Aorta (tissue), 5 donors: ENCODE measurements at regions of chr7 and their contacts with region 1.

Region 1: DNA sequence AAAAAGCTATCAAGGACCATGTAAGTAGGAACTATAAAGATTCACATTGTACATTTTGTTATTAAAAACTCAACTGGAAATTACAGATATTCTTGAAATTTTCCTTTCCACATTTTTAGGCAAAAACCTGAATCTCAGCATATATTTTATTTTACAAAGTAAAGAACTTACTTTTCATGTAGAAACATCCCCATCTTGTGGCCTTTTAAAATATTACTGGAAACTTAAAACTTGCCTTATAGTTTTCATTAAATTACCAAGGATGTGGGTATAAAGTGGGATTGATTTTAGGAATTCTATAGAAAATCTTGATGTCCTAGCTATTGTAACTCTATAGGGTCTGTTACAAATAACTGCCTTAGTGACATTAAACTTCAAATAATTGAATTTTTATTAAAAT is 10.6 kb downstream of the DBF4 start:
- DNase-seq: no peak
- ATAC-seq: no peak
- H3K4me3 ChIP-seq: no peak overlapping the region
- H3K27ac ChIP-seq: no peak overlapping the region
- H3K4me1 ChIP-seq: no peaks in the 10 kb centered on the region
- H3K27me3 ChIP-seq: no peaks in the 10 kb centered on the region

Region 2: DNA sequence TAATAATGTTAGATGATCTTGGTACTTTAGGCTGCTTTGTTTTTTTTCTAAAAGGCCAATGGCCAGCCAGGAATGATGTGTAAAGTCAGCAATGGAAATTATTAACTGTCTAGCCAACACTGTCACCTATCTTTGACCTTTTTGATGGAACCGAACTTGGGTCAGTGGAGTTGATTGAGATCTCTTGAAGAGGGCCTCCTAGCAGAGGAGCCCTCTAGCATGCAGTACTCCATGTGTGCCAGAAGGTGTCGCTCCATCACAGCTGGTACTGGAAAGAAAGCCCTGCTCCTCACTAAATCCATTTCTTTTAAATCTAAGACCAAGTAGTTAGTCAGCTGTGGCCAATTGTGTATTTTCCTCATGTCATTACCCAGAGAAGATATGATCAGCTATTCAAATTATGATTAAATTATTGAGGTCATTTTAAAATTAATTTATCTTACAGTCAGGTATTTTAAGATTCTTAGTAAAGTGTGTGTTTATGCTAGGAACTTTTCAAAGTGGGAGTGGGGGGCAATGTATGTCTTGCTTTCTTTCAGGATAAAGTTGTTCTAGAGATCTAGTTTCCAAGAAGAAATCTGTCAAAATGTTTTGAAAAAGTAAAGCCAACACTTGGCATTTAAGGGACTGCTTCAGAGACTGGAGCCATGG is 574.5 kb before region 1 on chr7:
- intact Hi-C with region 1: loop called in 1 of 2 experiments (anchors 10 kb)
- DNase-seq: peak in 1 of 2 donors; percentile 49
- ATAC-seq: peak; percentile 94
- H3K4me3 ChIP-seq: no peak overlapping the region
- H3K27ac ChIP-seq: no peak overlapping the region
- H3K4me1 ChIP-seq: no peaks in the 10 kb centered on the region
- H3K27me3 ChIP-seq: no peaks in the 10 kb centered on the region

Region 3: GRCh38 chr7:87345166-87345927 is 541.5 kb before region 1 on chr7 and contains the start of gene CROT:
- intact Hi-C with region 1: loop called in 1 of 2 experiments (anchors 10 kb)
- DNase-seq: peak; percentile 98
- ATAC-seq: peak; percentile 100
- H3K4me3 ChIP-seq: peak within 1 kb of the TSS; percentile 74 to 78
- H3K27ac ChIP-seq: peak within 1 kb of the TSS; percentile 83 to 89
- H3K4me1 ChIP-seq: peaks cover 1 to 3% of the 10 kb centered on the region in 2 donors
- H3K27me3 ChIP-seq: no peaks in the 10 kb centered on the region
- total RNA-seq, gene CROT: 11.8 to 19.5 TPM

Region 4: DNA sequence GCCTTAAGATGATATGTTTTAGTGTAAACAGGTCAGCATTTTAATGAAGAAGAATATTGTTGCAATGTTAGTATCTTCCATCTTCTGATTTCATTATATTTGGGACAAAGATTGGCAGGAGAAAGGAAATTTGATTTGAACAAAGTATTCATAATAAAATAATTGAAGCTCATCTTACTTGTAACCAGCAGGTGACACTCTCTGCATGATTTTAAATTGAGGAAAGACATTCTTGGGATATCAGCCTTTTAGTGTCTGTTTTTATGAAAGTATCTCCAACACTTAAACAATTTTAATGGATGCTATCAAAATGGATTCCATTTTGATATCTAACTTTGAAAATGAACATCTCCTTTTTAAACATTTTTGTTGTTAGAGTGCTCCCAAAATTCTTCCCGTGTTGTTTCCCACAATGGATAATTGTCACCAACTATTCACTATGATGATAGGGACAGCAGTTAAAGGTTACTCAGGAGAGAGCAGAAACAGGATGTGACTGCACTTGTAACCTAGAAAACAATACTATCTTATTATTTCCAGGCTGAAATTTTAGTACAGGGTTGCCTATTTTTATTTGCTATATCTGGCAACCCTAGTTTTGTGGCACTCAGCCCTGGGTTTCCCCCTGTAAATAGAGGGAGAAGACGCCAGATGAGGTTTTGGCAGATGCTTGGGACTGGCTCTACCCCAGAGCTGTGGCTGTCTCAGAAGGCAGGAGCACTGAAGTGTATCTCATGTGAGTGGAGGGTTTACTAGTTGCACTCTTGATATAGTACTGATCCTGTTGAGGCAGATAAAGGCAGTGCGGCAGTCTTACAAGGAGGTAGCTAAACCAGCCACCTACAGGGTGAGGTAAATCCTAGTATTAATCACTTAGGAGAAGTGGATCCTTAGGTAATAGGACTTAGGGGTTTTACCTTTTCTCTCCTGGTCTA is 380.4 kb before region 1 on chr7:
- intact Hi-C with region 1: loop called in 1 of 2 experiments (anchors 5 kb)
- DNase-seq: no peak
- ATAC-seq: no peak
- H3K4me3 ChIP-seq: no peak overlapping the region
- H3K27ac ChIP-seq: no peak overlapping the region
- H3K4me1 ChIP-seq: no peaks in the 10 kb centered on the region
- H3K27me3 ChIP-seq: no peaks in the 10 kb centered on the region

Region 5: GRCh38 chr7:87797798-87798403 is 89.0 kb before region 1 on chr7:
- intact Hi-C with region 1: loop called (anchors 5 kb)
- DNase-seq: no peak
- ATAC-seq: peak; percentile 72
- H3K4me3 ChIP-seq: no peak overlapping the region
- H3K27ac ChIP-seq: no peak overlapping the region
- H3K4me1 ChIP-seq: no peaks in the 10 kb centered on the region
- H3K27me3 ChIP-seq: no peaks in the 10 kb centered on the region

Region 6: DNA sequence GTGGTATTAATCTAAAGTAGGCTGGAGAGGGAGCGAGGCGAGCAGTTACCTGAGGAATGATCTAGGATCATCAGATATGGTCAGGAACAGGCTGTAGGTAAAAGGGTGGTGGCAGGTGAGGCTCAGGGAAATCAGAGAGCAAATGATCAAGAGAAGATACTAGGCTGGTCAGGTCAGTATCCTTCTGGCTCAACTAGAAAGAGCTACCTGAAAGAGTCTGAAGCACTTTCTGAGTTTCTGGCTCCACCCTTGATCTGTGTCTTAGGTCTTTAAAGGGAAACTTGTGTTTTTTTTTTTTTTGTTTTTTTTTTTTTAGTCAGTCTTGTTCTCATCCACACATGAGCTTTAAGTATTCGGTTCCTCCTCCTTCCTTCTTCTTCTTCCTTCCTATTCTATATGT is 57.7 kb after region 1 on chr7:
- intact Hi-C with region 1: no loop called
- DNase-seq: no peak
- ATAC-seq: no peak
- H3K4me3 ChIP-seq: no peak overlapping the region
- H3K27ac ChIP-seq: no peak overlapping the region
- H3K4me1 ChIP-seq: no peaks in the 10 kb centered on the region
- H3K27me3 ChIP-seq: no peaks in the 10 kb centered on the region